ENCODE measurements at regions of chr19 and their contacts with region 1.

Region 1: DNA sequence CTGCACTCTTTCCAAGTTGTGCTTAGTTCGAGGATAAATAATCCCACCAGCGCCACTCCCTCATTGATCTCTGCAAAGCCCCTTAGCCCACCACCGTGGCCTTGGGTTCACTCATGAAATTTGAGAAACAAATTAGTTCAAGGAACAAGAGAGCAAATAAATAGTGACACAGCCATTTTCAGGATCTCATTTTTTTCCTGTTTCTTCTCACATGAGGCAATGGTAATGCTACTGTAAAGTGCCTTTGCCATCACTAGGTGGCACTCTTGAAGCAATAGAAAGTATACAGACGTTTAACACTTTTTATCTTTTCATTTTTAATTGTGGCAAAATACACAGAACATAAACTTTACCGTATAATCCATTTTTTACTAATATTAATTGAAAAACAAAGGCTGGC is 76.8 kb upstream of the ZNF835 start:
- DNase-seq: no peak
- ATAC-seq: peak; percentile 45

Region 2: DNA sequence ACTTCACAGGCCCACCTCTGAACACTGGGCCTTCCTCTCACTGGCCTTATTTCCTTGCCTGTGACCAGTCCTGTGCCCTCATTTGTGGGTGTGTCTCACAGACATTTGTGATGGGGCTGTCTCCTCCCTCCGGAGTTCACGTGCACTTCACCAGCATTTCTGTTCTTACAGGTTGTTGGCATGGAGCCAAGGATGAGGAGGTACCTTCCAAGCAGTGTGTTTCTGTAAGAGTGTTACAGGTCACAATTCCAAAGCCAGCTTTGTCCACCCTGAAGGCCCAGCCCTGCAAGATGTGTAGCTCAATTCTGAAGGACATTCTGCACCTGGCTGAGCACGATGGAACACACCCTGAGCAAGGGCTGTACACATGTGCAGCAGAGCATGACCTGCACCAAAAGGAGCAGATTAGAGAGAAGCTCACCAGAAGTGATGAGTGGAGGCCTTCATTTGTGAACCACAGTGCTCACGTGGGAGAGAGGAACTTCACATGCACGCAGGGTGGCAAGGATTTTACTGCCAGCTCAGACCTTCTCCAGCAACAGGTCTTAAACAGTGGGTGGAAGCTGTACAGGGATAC is 694.8 kb after region 1 on chr19:
- intact Hi-C with region 1: loop called (anchors 5 kb)
- DNase-seq: no peak
- ATAC-seq: no peak